WTC11 (cell line): ENCODE measurements at regions of chr2 and their contacts with region 1.

Region 1: DNA sequence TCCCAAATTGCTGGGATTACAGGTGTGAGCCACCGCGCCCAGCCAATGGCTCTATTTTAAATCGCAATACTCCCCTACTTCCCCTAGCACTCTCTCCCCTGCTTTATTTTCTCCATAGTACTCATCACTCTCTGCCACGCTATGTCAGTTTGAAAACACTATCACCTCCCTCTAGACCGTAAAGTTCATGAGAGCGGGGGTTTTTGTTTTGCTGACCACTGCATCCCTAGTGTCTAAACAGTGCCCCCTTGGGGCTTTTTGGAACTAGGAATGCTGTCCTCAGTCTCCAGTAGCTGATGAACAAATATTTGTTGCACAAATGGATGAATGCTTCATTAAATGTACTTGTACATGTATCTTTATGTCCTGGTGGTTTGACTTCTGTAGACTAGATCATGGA is 44.1 kb downstream of the ATOH8 start:
- DNase-seq: no peak
- ATAC-seq: peak; percentile 73
- H3K4me3 Mint-ChIP-seq: no peak overlapping the region
- H3K27ac Mint-ChIP-seq: no peak overlapping the region
- H3K4me1 Mint-ChIP-seq: no peaks in the 10 kb centered on the region
- H3K27me3 Mint-ChIP-seq: peaks cover 7% of the 10 kb centered on the region; the same call in 1 of the 2 replicates
- CTCF ChIP-seq: 0 out of 2 replicates have a peak, but pooled peaks have one; percentile 13

Region 2: DNA sequence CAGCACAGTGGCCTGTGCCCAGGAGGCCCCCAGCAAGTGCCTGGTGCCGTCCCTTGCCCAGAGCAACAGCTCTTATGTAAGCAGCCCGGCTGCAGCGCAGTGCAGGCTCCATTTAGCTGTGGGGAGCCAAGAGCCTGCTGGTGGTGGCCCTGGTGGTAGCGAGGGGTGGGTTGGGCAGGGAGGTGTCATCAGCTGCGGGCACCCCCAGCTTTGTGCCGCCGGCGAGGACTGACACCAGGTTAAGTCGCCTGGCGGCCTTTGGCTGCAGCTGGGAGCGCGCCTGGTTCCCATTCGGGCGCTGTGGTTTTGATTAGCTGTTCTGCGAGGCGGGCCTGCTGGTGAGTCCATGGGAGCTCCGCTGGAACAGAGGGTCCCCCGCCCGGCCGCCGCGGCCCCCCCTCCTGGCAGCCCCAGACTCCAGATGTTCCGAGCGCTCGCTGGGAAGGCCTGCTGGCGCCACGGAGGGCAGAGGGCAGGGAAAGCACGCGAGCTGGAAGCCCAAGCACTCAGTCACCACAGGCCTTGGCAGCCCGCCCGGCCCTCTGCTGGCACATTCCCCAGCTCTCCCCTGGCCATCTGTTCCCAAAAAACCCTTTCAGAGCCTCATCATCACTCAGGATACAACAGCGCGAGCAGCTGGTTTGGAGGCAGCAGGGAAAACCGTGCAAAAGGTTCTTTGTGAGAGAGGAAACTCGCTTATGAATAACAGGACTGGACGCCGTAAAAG is 25.7 kb before region 1 on chr2:
- CTCF ChIA-PET with region 1: interaction called, 13 read pairs
- POLR2A ChIA-PET with region 1: no interaction called
- DNase-seq: peak; percentile 59
- ATAC-seq: peak; percentile 51
- H3K4me3 Mint-ChIP-seq: no peak overlapping the region
- H3K27ac Mint-ChIP-seq: no peak overlapping the region
- H3K4me1 Mint-ChIP-seq: peaks cover 47% of the 10 kb centered on the region
- H3K27me3 Mint-ChIP-seq: peaks cover 26% of the 10 kb centered on the region
- CTCF ChIP-seq: no peak

Region 3: GRCh38 chr2:86171295-86171694 is 373.4 kb after region 1 on chr2:
- CTCF ChIA-PET with region 1: no interaction called
- POLR2A ChIA-PET with region 1: no interaction called
- DNase-seq: no peak
- ATAC-seq: no peak
- H3K4me3 Mint-ChIP-seq: no peak overlapping the region
- H3K27ac Mint-ChIP-seq: no peak overlapping the region
- H3K4me1 Mint-ChIP-seq: no peaks in the 10 kb centered on the region
- H3K27me3 Mint-ChIP-seq: no peaks in the 10 kb centered on the region
- CTCF ChIP-seq: no peak